ENCODE measurements at regions of chr4 and their contacts with region 1.

Region 1: GRCh38 chr4:106898621-106899230 is 137.4 kb downstream of the DKK2 start:
- DNase-seq: peak; percentile 81
- H3K4me3 ChIP-seq: no peak overlapping the region
- H3K27ac ChIP-seq: no peak overlapping the region
- H3K4me1 ChIP-seq: no peaks in the 10 kb centered on the region
- H3K27me3 ChIP-seq: no peaks in the 10 kb centered on the region
- CTCF ChIP-seq: peak; percentile 95

Region 2: GRCh38 chr4:106266201-106266600 is 632.5 kb before region 1 on chr4:
- CTCF ChIA-PET with region 1: interaction called, 4 read pairs
- POLR2A ChIA-PET with region 1: no interaction called
- intact Hi-C with region 1: loop called (anchors 5 kb)
- DNase-seq: peak; percentile 79
- H3K4me3 ChIP-seq: no peak overlapping the region
- H3K27ac ChIP-seq: no peak overlapping the region
- H3K4me1 ChIP-seq: peaks cover 13% of the 10 kb centered on the region
- H3K27me3 ChIP-seq: no peaks in the 10 kb centered on the region
- CTCF ChIP-seq: peak; percentile 72

Region 3: DNA sequence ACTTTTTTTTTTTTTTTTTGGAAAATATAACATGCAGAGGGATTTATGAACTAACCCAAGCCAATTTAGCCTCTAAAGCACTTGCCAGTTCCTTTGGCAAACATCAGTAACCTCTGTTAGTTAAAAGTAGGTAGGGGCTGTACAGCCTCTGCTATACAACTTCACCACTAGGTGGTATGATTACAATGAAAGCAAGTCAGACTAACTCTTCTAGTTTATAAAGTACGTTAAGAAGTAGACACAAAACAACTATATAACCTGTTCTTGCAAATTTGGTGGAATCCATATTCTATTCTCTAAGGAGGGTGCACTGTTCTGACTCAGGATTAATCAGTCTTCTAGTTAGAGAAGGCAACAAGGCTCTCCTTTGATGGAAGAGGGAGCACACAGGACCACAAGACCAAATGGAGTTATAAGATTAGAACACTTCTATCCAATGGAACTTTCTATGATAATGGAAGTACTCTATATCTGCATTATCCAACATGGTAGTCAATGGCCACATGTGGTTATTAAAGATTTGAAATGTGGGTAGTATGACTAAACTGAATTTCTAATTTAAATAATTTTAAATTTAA is 569.6 kb before region 1 on chr4:
- CTCF ChIA-PET with region 1: no interaction called
- POLR2A ChIA-PET with region 1: no interaction called
- intact Hi-C with region 1: loop called (anchors 2 kb)
- DNase-seq: peak; percentile 59
- H3K4me3 ChIP-seq: no peak overlapping the region
- H3K27ac ChIP-seq: no peak overlapping the region
- H3K4me1 ChIP-seq: no peaks in the 10 kb centered on the region
- H3K27me3 ChIP-seq: no peaks in the 10 kb centered on the region
- CTCF ChIP-seq: peak; percentile 86

Region 4: GRCh38 chr4:106551724-106552123 is 347.0 kb before region 1 on chr4:
- CTCF ChIA-PET with region 1: no interaction called
- POLR2A ChIA-PET with region 1: no interaction called
- intact Hi-C with region 1: no loop called
- DNase-seq: no peak
- H3K4me3 ChIP-seq: no peak overlapping the region
- H3K27ac ChIP-seq: no peak overlapping the region
- H3K4me1 ChIP-seq: no peaks in the 10 kb centered on the region
- H3K27me3 ChIP-seq: no peaks in the 10 kb centered on the region
- CTCF ChIP-seq: no peak

Region 5: GRCh38 chr4:106818764-106819163 is 80.0 kb before region 1 on chr4:
- CTCF ChIA-PET with region 1: no interaction called
- POLR2A ChIA-PET with region 1: no interaction called
- intact Hi-C with region 1: loop called (anchors 5 kb)
- DNase-seq: no peak
- H3K4me3 ChIP-seq: no peak overlapping the region
- H3K27ac ChIP-seq: no peak overlapping the region
- H3K4me1 ChIP-seq: no peaks in the 10 kb centered on the region
- H3K27me3 ChIP-seq: no peaks in the 10 kb centered on the region
- CTCF ChIP-seq: peak; percentile 62

Region 6: GRCh38 chr4:106996490-106996889 is 97.8 kb after region 1 on chr4:
- CTCF ChIA-PET with region 1: no interaction called
- POLR2A ChIA-PET with region 1: no interaction called
- intact Hi-C with region 1: no loop called
- DNase-seq: peak; percentile 23
- H3K4me3 ChIP-seq: no peak overlapping the region
- H3K27ac ChIP-seq: no peak overlapping the region
- H3K4me1 ChIP-seq: peaks cover 24% of the 10 kb centered on the region
- H3K27me3 ChIP-seq: no peaks in the 10 kb centered on the region
- CTCF ChIP-seq: no peak

Measured in A673 (cell line).